CD8-positive, alpha-beta T cell (primary cell): ENCODE measurements at regions of chr3 and their contacts with region 1.

Region 1: DNA sequence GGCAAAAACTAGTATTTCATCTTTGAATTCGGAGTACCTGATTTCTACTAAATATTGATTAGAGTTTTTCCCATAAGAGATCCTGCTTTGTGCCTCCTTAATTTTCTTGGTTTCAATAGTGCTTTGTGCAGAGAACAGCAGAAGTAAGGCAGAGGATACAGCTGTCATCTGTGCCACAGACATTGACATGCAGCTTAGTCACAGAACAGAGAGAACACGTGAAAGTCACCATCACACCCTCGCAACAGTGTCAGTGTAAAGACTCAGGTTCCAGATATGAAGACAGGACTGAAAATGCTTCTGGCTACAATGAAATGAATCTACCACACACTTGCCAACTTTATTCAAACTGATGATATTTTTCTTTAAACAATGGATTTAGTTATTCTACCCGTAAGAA is 942.8 kb upstream of the CFAP20DC start:
- DNase-seq: no peak
- ATAC-seq: no peak
- H3K4me3 ChIP-seq: no peak overlapping the region
- H3K4me3 Mint-ChIP-seq: no peak overlapping the region
- H3K27ac ChIP-seq: no peak overlapping the region
- H3K27ac Mint-ChIP-seq: no peak overlapping the region
- H3K4me1 ChIP-seq: peaks cover 54% of the 10 kb centered on the region
- H3K4me1 Mint-ChIP-seq: peaks cover 72% of the 10 kb centered on the region
- H3K27me3 ChIP-seq: no peaks in the 10 kb centered on the region
- H3K27me3 Mint-ChIP-seq: no peaks in the 10 kb centered on the region
- CTCF ChIP-seq: no peak

Region 2: GRCh38 chr3:59424268-59425010 is 568.1 kb before region 1 on chr3:
- CTCF ChIA-PET with region 1: no interaction called
- POLR2A ChIA-PET with region 1: no interaction called
- intact Hi-C with region 1: no loop called
- DNase-seq: peak in 5 of 9 experiments; percentile 20 to 65 (median 29)
- ATAC-seq: peak; percentile 45
- H3K4me3 ChIP-seq: no peak overlapping the region
- H3K4me3 Mint-ChIP-seq: peak overlapping the region; percentile 20
- H3K27ac ChIP-seq: no peak overlapping the region
- H3K27ac Mint-ChIP-seq: peak overlapping the region; percentile 66
- H3K4me1 ChIP-seq: peaks cover 42% of the 10 kb centered on the region
- H3K4me1 Mint-ChIP-seq: peaks cover 47% of the 10 kb centered on the region
- H3K27me3 ChIP-seq: no peaks in the 10 kb centered on the region
- H3K27me3 Mint-ChIP-seq: no peaks in the 10 kb centered on the region
- CTCF ChIP-seq: no peak

Region 3: GRCh38 chr3:59731943-59732342 is 260.6 kb before region 1 on chr3:
- CTCF ChIA-PET with region 1: no interaction called
- POLR2A ChIA-PET with region 1: no interaction called
- intact Hi-C with region 1: no loop called
- DNase-seq: peak in 1 of 9 experiments; percentile 5
- ATAC-seq: no peak
- H3K4me3 ChIP-seq: no peak overlapping the region
- H3K4me3 Mint-ChIP-seq: no peak overlapping the region
- H3K27ac ChIP-seq: no peak overlapping the region
- H3K27ac Mint-ChIP-seq: no peak overlapping the region
- H3K4me1 ChIP-seq: peaks cover 22% of the 10 kb centered on the region
- H3K4me1 Mint-ChIP-seq: peaks cover 32% of the 10 kb centered on the region
- H3K27me3 ChIP-seq: no peaks in the 10 kb centered on the region
- H3K27me3 Mint-ChIP-seq: no peaks in the 10 kb centered on the region
- CTCF ChIP-seq: no peak

Region 4: DNA sequence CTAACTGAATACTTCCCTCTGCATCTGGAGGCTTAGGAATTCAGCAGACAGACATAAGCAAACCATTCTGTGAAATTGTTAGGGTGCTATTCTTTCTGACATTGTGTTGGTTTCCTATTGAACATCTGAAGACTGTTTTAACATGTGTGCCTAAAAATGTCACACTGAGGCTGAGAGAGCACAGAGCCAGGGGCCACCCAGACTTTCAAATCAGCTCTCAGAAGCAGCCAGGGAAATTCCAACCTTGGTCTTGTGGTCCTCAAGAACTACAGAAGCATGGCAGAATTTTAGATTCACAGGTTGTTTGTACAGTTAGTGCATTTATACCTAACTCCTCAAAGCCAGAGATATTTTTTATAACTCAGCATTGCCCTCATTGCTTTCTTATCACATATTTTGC is 13.6 kb before region 1 on chr3:
- CTCF ChIA-PET with region 1: no interaction called
- POLR2A ChIA-PET with region 1: interaction called, 3 read pairs
- intact Hi-C with region 1: loop called in 1 of 2 experiments (anchors 1 kb)
- DNase-seq: peak in 3 of 9 experiments; percentile 28 to 74 (median 45)
- ATAC-seq: peak; percentile 79
- H3K4me3 ChIP-seq: no peak overlapping the region
- H3K4me3 Mint-ChIP-seq: no peak overlapping the region
- H3K27ac ChIP-seq: no peak overlapping the region
- H3K27ac Mint-ChIP-seq: peak overlapping the region; percentile 45
- H3K4me1 ChIP-seq: peaks cover 32% of the 10 kb centered on the region
- H3K4me1 Mint-ChIP-seq: peaks cover 38% of the 10 kb centered on the region
- H3K27me3 ChIP-seq: no peaks in the 10 kb centered on the region
- H3K27me3 Mint-ChIP-seq: no peaks in the 10 kb centered on the region
- CTCF ChIP-seq: no peak